PC-3 (cell line): ENCODE measurements at regions of chr21 and their contacts with region 1.

Region 1: DNA sequence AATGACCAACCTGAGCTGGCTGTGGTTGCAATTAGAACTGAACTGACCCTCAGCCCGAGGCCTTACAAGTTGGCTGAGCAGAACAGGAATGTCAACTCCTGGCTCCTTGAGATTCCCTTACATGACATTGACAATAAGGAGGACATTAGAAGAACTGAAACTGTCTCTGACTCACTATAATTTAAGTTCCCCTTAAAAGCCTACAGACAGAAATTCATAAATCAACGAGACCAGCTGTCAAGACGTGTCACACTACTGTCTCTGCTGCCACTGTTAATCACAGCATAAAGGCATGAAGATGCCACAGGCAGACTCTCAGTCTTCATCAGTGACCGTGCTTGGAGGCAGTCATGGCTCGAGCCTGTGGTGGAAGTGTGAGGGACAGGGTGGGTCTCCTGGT is 168.8 kb downstream of the GABPA start:
- DNase-seq: no peak
- ATAC-seq: no peak
- H3K4me3 ChIP-seq: no peak overlapping the region
- H3K27ac ChIP-seq: no peak overlapping the region
- H3K4me1 ChIP-seq: peaks cover 10% of the 10 kb centered on the region
- H3K27me3 ChIP-seq: no peaks in the 10 kb centered on the region
- CTCF ChIP-seq: no peak

Region 2: GRCh38 chr21:25881525-25882376 is 21.9 kb before region 1 on chr21:
- CTCF ChIA-PET with region 1: no interaction called
- POLR2A ChIA-PET with region 1: interaction called, 12 read pairs
- intact Hi-C with region 1: no loop called
- DNase-seq: peak; percentile 73
- ATAC-seq: peak; percentile 37
- H3K4me3 ChIP-seq: no peak overlapping the region
- H3K27ac ChIP-seq: no peak overlapping the region
- H3K4me1 ChIP-seq: peaks cover 34% of the 10 kb centered on the region
- H3K27me3 ChIP-seq: no peaks in the 10 kb centered on the region
- CTCF ChIP-seq: peak; percentile 98

Region 3: DNA sequence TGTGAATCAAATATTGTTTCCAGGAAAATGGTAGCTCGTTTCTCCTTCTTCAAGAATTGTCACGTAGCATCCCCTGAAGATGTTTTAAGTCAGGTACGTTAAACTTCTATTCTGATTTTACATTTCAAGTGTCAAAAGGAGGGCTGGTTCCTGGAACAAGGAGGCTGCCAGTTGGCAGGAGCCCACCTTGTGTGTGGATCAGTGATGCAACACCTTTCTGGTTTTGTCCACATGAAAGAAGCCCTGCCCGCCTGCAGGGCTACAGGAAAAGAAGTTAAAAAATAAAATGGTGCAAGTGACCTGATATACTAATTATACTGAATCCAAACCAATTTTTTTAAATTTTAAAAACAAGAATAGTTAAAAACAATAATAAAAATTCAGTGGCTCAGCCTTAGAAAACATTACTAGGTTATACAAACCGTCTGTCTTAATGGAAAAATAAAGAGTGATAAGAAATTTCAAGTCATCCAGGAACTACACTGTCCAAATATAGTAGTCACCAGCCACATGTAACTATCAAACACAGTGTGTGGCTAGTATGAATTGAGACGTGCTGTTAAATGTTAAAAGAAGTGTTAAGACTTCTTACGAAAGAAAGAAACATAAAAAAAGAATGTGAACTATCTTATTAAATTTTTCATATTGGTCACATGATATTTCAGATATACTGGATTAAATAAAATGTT is 143.8 kb after region 1 on chr21:
- CTCF ChIA-PET with region 1: no interaction called
- POLR2A ChIA-PET with region 1: no interaction called
- intact Hi-C with region 1: no loop called
- DNase-seq: no peak
- ATAC-seq: no peak
- H3K4me3 ChIP-seq: no peak overlapping the region
- H3K27ac ChIP-seq: no peak overlapping the region
- H3K4me1 ChIP-seq: peaks cover 4% of the 10 kb centered on the region
- H3K27me3 ChIP-seq: no peaks in the 10 kb centered on the region
- CTCF ChIP-seq: no peak

Region 4: DNA sequence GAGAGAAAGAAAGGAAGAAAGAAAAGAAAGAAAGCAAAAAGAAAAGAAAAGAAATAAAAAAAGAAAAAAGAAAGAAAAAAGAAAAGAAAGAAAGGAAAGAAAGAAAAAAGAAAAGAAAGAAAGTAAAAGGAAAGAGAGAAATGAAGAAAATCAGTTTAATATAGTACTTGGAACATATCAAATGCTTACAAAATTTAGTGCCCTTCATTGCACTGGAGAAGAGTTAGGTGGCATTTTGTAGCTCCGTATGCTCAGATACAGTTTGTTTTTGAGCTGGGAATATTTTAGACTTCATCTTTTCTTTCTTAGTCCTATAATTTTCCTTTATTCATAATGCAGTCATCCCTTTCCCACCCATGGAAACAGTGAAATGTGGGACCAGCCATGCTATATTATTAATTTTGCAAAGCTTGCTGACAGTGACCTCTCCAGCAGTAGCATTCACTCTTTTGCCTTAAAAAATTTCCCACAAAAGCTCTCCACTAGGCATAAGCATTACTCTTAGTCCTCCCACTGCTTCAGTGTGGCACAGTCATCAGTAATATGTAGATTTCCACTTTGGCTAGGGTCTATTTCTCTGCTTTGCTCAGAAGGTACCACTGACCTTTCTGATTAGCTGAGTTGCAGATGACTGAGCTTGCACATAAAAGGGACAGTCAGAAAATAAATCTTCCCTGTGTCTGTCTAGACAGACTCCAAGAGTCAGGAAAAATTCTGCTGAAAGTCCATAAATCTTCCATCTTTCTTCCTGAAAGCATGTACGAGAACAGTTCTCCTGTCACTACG is 323.3 kb after region 1 on chr21:
- CTCF ChIA-PET with region 1: no interaction called
- POLR2A ChIA-PET with region 1: interaction called, 18 read pairs
- intact Hi-C with region 1: no loop called
- DNase-seq: no peak
- ATAC-seq: no peak
- H3K4me3 ChIP-seq: no peak overlapping the region
- H3K27ac ChIP-seq: no peak overlapping the region
- H3K4me1 ChIP-seq: no peaks in the 10 kb centered on the region
- H3K27me3 ChIP-seq: no peaks in the 10 kb centered on the region
- CTCF ChIP-seq: no peak